ENCODE measurements at regions of chr12 and their contacts with region 1.

Region 1: DNA sequence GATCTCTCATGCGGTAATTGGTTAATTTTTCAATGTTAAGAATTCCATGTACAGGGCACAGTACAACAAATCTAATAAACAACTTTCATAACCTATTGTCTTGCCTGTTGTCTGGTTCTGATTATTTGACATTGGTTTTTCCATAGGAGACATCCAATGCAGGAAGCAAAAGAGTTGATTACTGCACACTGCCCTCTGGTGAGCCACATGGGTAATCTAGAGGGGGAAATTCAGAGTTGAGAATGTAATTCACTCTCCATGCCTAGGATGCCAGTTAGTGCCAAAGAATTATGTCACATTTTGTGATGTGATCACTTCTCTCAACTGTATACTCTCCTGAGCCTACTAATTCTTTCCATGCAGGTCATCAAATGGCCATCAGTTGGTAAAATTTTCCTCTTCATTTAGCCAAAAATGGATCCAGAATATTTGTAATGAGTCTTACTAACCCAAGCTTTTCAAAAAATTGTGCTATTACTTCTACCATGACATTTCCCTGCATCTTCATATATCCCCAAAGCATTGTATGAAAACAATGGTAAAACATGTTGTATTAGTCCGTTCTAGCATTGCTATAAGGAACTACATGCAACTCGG is 17.7 kb upstream of the CCDC91 start:
- DNase-seq: no peak
- H3K4me3 ChIP-seq: no peak overlapping the region
- H3K27ac ChIP-seq: no peak overlapping the region
- H3K4me1 ChIP-seq: no peaks in the 10 kb centered on the region
- H3K27me3 ChIP-seq: no peaks in the 10 kb centered on the region
- CTCF ChIP-seq: peak in 2 of 4 experiments; percentile 9 to 27
- POLR2A ChIP-seq: no peak

Region 2: DNA sequence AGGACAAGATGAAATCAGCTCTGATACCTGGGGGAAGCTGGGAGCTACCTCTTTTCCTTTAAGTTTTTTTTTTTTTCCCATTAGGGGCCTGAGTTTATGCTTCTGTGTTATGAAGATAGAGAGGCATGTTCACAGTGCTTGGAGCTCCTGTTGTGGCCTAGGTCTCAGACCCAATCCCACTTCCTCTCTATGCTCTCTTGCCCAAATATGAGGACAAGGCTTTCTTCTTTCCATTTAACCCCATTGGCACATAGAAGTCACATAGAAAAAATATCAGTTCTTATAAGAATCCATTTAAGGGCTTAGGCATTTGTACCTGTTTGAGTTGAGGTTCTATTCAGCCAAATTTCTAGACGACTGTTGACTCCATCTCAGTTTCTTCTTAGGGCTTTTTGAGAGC is 449.3 kb before region 1 on chr12:
- intact Hi-C with region 1: loop called (anchors 10 kb)
- DNase-seq: no peak
- H3K4me3 ChIP-seq: no peak overlapping the region
- H3K27ac ChIP-seq: no peak overlapping the region
- H3K4me1 ChIP-seq: no peaks in the 10 kb centered on the region
- H3K27me3 ChIP-seq: no peaks in the 10 kb centered on the region
- CTCF ChIP-seq: no peak
- POLR2A ChIP-seq: no peak

Region 3: GRCh38 chr12:27969624-27970400 is 202.7 kb before region 1 on chr12:
- intact Hi-C with region 1: loop called (anchors 10 kb)
- DNase-seq: peak; percentile 56
- H3K4me3 ChIP-seq: peak overlapping the region; percentile 39 to 40
- H3K27ac ChIP-seq: peak overlapping the region in 1 of 2 donors; percentile 41
- H3K4me1 ChIP-seq: no peaks in the 10 kb centered on the region
- H3K27me3 ChIP-seq: peaks cover 5% of the 10 kb centered on the region
- CTCF ChIP-seq: peak in 1 of 4 experiments; percentile 24
- POLR2A ChIP-seq: no peak

Region 4: GRCh38 chr12:28223025-28223554 is 50.6 kb after region 1 on chr12:
- intact Hi-C with region 1: no loop called
- DNase-seq: no peak
- H3K4me3 ChIP-seq: no peak overlapping the region
- H3K27ac ChIP-seq: no peak overlapping the region
- H3K4me1 ChIP-seq: no peaks in the 10 kb centered on the region
- H3K27me3 ChIP-seq: no peaks in the 10 kb centered on the region
- CTCF ChIP-seq: no peak
- POLR2A ChIP-seq: no peak